BJ (cell line): ENCODE measurements at regions of chr7 and their contacts with region 1.

Region 1: DNA sequence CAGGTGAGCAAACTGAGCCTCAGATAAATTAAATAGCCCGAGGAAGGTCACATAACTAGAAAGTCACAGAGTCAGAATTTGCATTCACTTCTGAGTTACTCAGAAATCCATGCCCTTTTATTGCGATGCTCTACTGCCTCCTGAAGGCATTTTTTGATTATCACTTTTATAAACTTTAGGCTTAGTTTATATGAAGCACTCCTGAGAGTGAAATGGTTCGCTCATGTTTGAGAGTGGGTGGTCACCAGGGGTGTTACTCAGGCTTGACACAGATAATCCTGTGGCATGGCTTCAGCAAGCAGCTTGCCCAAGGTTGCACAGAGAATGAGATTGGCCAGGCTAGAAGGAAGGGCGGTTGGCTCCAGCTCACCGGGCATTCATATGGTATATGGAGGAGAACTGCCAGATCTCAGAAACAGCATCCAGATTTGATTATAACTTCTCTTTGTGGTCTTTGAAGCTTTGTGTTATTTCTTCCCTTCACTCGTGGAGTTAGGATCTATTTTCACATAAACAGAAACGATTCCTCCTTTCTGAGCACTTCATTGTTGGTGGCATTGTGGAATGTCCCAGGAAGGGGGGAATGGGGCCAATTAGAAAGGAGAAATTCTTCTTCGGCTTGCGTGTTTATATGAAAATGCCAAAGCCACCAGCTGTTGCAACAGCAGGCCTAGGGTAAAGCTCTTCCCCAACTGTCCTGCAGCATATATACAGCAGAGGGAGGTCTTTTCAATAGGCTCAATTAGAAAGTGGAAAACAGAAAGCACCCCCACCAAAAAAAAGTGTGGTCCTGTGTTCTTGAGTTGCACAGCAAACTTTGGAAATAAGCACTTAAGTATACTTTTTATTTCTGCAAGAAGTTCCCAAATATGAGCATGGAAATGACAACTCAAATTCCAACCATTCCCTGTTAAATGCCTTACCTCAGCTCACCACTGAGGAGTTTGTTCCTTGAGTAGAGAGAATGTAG is 628.8 kb downstream of the SUGCT start:
- DNase-seq: peak; percentile 64
- H3K4me3 ChIP-seq: no peak overlapping the region
- H3K27me3 ChIP-seq: no peaks in the 10 kb centered on the region
- CTCF ChIP-seq: peak; percentile 51

Region 2: GRCh38 chr7:40742270-40742669 is 21.3 kb before region 1 on chr7:
- CTCF ChIA-PET with region 1: no interaction called
- POLR2A ChIA-PET with region 1: no interaction called
- DNase-seq: no peak
- H3K4me3 ChIP-seq: no peak overlapping the region
- H3K27me3 ChIP-seq: no peaks in the 10 kb centered on the region
- CTCF ChIP-seq: no peak

Region 3: GRCh38 chr7:40753455-40753854 is 10.1 kb before region 1 on chr7:
- CTCF ChIA-PET with region 1: interaction called, 17 read pairs
- POLR2A ChIA-PET with region 1: no interaction called
- DNase-seq: no peak
- H3K4me3 ChIP-seq: no peak overlapping the region
- H3K27me3 ChIP-seq: no peaks in the 10 kb centered on the region
- CTCF ChIP-seq: no peak